SK-N-SH (cell line): ENCODE measurements at regions of chr3 and their contacts with region 1.

Region 1: GRCh38 chr3:9362731-9363530 is at the start of gene THUMPD3:
- DNase-seq: peak; percentile 87
- H3K4me3 ChIP-seq: peak within 1 kb of the TSS; percentile 64 to 71
- H3K27ac ChIP-seq: peak within 1 kb of the TSS; percentile 95 to 97
- H3K4me1 ChIP-seq: peaks cover 3 to 8% of the 10 kb centered on the region in 2 experiments; a peak in 3 of 4 replicates
- H3K27me3 ChIP-seq: no peaks in the 10 kb centered on the region
- CTCF ChIP-seq: no peak
- EP300 ChIP-seq: no peak
- RAD21 ChIP-seq: no peak
- polyA plus RNA-seq, gene THUMPD3: 27.1 and 34.2 TPM in 2 replicates

Region 2: DNA sequence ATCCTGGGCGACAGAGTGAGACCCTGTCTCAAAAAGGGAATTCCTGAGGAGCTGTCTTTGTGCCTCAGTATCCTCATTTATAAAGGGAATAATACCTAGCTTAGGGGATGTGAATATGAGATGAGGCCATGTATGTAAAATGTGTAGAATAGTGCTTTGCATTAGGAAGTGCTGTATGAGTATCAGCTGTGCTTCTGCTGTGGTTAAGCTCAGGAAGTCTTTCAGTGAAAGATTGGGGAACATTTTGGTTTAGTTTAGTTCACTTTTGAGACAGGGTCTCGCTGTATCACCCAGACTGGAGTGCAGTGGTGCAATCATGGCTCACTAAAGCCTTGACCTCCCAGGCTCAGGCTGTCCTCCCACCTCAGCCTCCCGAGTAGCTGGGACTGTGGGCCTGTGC is 10.5 kb after region 1 on chr3:
- CTCF ChIA-PET with region 1: interaction called, 10 read pairs
- POLR2A ChIA-PET with region 1: interaction called, 7 read pairs
- DNase-seq: no peak
- H3K4me3 ChIP-seq: no peak overlapping the region
- H3K27ac ChIP-seq: no peak overlapping the region
- H3K4me1 ChIP-seq: no peaks in the 10 kb centered on the region
- H3K27me3 ChIP-seq: no peaks in the 10 kb centered on the region
- CTCF ChIP-seq: no peak
- EP300 ChIP-seq: no peak
- RAD21 ChIP-seq: no peak

Region 3: DNA sequence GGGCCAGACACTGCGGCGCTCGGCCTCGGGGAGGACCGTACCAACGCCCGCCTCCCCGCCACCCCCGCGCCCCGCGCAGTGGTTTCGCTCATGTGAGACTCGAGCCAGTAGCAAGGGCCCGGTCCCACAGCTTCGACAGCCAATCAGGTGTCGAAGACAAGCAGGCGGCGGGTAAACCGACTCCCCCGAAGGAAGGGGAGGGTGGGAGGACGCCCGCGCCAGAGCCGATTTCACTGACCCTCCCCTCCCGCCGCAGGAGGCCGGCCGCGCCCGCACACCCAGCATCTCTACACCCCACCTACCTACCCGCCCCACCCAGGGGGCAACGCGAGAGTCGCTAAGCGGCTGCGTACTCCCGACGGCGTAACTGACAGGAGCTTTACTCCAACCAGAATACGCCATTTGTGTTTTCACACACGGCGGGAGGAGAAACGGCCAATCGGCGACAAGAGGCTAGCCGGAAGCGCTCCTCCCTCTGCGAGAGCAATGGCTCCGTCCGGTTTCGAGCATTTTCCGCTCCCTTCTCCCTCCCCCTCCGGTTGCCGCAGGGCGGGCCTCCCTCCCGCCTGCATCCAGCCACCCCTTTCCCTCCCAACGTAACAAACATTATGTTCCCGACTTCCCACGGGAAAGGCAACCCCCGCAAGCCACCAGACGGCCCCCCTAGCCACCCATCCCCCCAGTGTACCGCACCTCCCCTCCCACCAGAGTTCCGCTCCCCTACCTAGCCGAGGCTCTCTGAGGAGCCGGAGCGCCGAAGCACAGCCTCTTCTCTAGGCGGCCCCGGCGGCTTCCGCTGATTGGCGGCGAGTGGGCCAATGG is 34.0 kb after region 1 on chr3:
- CTCF ChIA-PET with region 1: interaction called, 4 read pairs
- POLR2A ChIA-PET with region 1: interaction called, 39 read pairs
- DNase-seq: peak; percentile 91
- H3K4me3 ChIP-seq: peak overlapping the region; percentile 85 to 98
- H3K27ac ChIP-seq: peak overlapping the region; percentile 96 to 99
- H3K4me1 ChIP-seq: peaks cover 25 to 35% of the 10 kb centered on the region in 2 experiments; a peak in 3 of 4 replicates
- H3K27me3 ChIP-seq: no peaks in the 10 kb centered on the region
- CTCF ChIP-seq: no peak
- EP300 ChIP-seq: peak; percentile 13 to 41; a peak in 3 of 4 replicates
- RAD21 ChIP-seq: no peak